Naive thymus-derived CD4-positive, alpha-beta T cell (primary cell): ENCODE measurements at regions of chr15 and their contacts with region 1.

Region 1: DNA sequence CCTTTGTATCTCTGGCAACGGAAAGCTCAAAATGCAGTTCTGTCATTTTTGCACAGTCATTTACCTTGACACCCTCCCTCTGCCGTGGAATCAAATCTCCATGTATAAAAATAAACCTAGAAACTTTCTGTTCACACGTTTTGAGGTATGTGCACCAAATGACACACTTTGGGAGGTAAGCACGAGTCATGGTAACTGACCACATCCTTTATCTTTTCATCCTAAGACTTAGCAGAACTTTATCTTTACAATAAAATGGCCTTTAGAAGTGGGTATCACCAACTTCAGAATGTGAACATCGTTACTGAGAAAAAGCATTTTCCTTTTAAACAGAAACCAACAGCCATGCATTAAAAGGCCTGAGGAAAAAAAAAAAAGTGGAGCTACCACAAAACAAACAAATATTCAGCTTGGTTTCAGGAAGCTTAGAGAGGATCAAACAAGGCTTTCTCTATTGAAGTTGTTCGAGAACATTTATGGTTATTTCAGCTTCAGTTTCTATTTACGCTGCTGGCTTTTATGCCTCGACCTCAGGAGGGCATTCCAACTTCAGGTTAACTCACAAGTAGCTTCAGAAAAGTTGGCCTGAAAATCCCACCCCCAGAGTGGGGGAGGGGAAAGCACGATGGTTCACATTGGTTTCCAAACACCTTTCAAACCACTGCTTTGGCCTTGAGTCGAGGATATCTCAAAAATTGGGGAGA is 171.1 kb upstream of the ICE2 start:
- DNase-seq: peak in 8 of 9 donors; percentile 42 to 78 (median 62)
- ATAC-seq: peak; percentile 90
- H3K4me3 ChIP-seq: peak overlapping the region; percentile 33
- H3K4me3 Mint-ChIP-seq: peak overlapping the region; percentile 66 to 84 (median 75)
- H3K27ac ChIP-seq: no peak overlapping the region
- H3K27ac Mint-ChIP-seq: peak overlapping the region; percentile 55 to 96 (median 82)
- H3K4me1 ChIP-seq: peaks cover 18 to 23% of the 10 kb centered on the region in 2 donors
- H3K4me1 Mint-ChIP-seq: peaks cover 24 to 50% (median 39%) of the 10 kb centered on the region in 7 donors
- H3K27me3 ChIP-seq: no peaks in the 10 kb centered on the region
- H3K27me3 Mint-ChIP-seq: peaks cover 0 to 3% (median 0%) of the 10 kb centered on the region in 5 donors

Region 2: GRCh38 chr15:60660290-60661051 is 10.5 kb after region 1 on chr15:
- CTCF ChIA-PET with region 1: no interaction called
- POLR2A ChIA-PET with region 1: interaction called, 3 read pairs
- intact Hi-C with region 1: loop called in 1 of 2 experiments (anchors 1 kb)
- DNase-seq: no peak
- ATAC-seq: no peak
- H3K4me3 ChIP-seq: no peak overlapping the region
- H3K4me3 Mint-ChIP-seq: no peak overlapping the region
- H3K27ac ChIP-seq: no peak overlapping the region
- H3K27ac Mint-ChIP-seq: peak overlapping the region in 1 of 9 donors; percentile 31
- H3K4me1 ChIP-seq: no peaks in the 10 kb centered on the region
- H3K4me1 Mint-ChIP-seq: peaks cover 0 to 14% (median 3%) of the 10 kb centered on the region in 7 donors
- H3K27me3 ChIP-seq: no peaks in the 10 kb centered on the region
- H3K27me3 Mint-ChIP-seq: no peaks in the 10 kb centered on the region

Region 3: DNA sequence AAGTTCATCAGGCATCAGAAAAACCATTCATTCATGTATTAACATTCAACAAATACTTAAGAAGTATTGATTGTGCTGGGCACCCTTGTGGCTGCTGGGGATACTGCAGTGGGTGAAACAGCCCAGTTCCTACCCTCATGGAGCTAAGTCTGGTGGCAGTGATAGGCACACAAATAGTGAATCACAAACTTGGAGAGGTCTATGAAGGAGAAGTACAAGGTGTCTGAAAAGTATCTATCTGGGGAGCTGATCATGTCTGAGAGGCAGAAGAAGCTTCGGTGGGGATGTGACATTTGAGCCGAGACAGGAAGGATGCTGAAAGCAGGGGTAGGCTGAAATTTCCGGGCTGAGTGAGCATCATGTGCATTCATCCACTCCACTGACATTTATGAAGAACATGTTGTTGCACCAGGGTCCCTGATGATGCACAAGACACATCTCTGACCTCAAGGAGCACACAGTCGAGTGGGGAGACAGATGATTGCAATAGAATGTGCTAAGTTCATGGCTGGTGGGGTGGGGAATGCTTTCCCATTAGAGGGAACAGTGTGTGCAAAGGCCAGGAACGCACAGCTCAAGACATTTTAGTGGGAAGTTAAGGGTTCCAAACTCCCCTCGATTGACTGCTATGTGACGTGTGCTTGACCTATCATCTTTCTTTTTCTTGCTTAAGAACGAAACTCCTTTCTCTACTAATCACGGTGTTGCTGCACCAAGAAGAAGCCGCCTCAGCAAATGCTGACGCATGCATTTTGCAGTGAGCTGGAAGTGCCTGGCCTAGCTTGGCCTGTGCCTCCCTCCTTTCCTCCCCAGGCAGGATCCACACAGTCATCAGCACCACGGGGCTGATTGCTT is 138.1 kb after region 1 on chr15:
- CTCF ChIA-PET with region 1: no interaction called
- POLR2A ChIA-PET with region 1: interaction called, 3 read pairs
- intact Hi-C with region 1: loop called in 1 of 2 experiments (anchors 10 kb)
- DNase-seq: peak in 3 of 9 donors; percentile 7 to 23 (median 19)
- ATAC-seq: peak; percentile 74
- H3K4me3 ChIP-seq: no peak overlapping the region
- H3K4me3 Mint-ChIP-seq: peak overlapping the region in 4 of 10 donors; percentile 2 to 43 (median 8)
- H3K27ac ChIP-seq: no peak overlapping the region
- H3K27ac Mint-ChIP-seq: peak overlapping the region in 5 of 9 donors; percentile 1 to 64 (median 5)
- H3K4me1 ChIP-seq: no peaks in the 10 kb centered on the region
- H3K4me1 Mint-ChIP-seq: peaks cover 8 to 37% (median 16%) of the 10 kb centered on the region in 7 donors
- H3K27me3 ChIP-seq: no peaks in the 10 kb centered on the region
- H3K27me3 Mint-ChIP-seq: no peaks in the 10 kb centered on the region

Region 4: GRCh38 chr15:60899322-60899966 is 249.4 kb after region 1 on chr15:
- CTCF ChIA-PET with region 1: no interaction called
- POLR2A ChIA-PET with region 1: no interaction called
- intact Hi-C with region 1: loop called in 1 of 2 experiments (anchors 5 kb)
- DNase-seq: peak in 2 of 9 donors; percentile 1 to 36
- ATAC-seq: peak; percentile 81
- H3K4me3 ChIP-seq: no peak overlapping the region
- H3K4me3 Mint-ChIP-seq: peak overlapping the region in 1 of 10 donors; percentile 63
- H3K27ac ChIP-seq: no peak overlapping the region
- H3K27ac Mint-ChIP-seq: peak overlapping the region in 1 of 9 donors; percentile 59
- H3K4me1 ChIP-seq: no peaks in the 10 kb centered on the region
- H3K4me1 Mint-ChIP-seq: peaks cover 0 to 50% (median 0%) of the 10 kb centered on the region in 7 donors
- H3K27me3 ChIP-seq: no peaks in the 10 kb centered on the region
- H3K27me3 Mint-ChIP-seq: peaks cover 0 to 11% (median 0%) of the 10 kb centered on the region in 5 donors